Activated CD8-positive, alpha-beta T cell treated with anti-CD3 and anti-CD28 coated beads for 36 hours (primary cell): ENCODE measurements at regions of chr12 and their contacts with region 1.

Region 1: GRCh38 chr12:100142851-100143559 is at the start of gene BLTP3B:
- DNase-seq: peak; percentile 96
- ATAC-seq: peak; percentile 87
- H3K4me3 Mint-ChIP-seq: peak within 1 kb of the TSS; percentile 99
- H3K27ac Mint-ChIP-seq: peak within 1 kb of the TSS; percentile 100
- H3K4me1 Mint-ChIP-seq: peaks cover 36% of the 10 kb centered on the region
- H3K27me3 Mint-ChIP-seq: no peaks in the 10 kb centered on the region
- CTCF ChIP-seq: no peak
- total RNA-seq, gene BLTP3B: 39.6 to 41.3 TPM

Region 2: DNA sequence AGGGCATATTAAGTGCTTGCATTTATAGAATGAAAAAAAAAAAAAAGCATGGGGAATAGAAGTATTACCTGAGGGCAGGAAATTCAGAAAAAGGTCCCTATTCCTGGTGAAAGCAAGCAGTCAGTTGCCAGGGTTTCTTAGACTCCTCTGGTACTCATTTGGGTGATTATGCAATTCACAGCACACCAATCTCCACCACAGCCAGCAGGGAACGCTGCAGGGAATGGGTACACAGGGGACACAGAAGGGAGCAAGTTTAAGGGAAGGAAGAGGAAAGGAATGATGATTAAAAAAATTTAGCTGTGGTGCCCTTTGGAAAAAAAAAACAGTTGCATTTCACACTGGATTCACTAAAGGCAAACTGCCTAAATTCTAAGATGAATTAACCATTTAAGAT is 14.5 kb before region 1 on chr12:
- CTCF ChIA-PET with region 1: interaction called, 17 read pairs
- POLR2A ChIA-PET with region 1: interaction called, 3 read pairs
- intact Hi-C with region 1: no loop called
- DNase-seq: no peak
- ATAC-seq: no peak
- H3K4me3 Mint-ChIP-seq: no peak overlapping the region
- H3K27ac Mint-ChIP-seq: peak overlapping the region; percentile 18
- H3K4me1 Mint-ChIP-seq: peaks cover 40% of the 10 kb centered on the region
- H3K27me3 Mint-ChIP-seq: no peaks in the 10 kb centered on the region
- CTCF ChIP-seq: no peak

Region 3: DNA sequence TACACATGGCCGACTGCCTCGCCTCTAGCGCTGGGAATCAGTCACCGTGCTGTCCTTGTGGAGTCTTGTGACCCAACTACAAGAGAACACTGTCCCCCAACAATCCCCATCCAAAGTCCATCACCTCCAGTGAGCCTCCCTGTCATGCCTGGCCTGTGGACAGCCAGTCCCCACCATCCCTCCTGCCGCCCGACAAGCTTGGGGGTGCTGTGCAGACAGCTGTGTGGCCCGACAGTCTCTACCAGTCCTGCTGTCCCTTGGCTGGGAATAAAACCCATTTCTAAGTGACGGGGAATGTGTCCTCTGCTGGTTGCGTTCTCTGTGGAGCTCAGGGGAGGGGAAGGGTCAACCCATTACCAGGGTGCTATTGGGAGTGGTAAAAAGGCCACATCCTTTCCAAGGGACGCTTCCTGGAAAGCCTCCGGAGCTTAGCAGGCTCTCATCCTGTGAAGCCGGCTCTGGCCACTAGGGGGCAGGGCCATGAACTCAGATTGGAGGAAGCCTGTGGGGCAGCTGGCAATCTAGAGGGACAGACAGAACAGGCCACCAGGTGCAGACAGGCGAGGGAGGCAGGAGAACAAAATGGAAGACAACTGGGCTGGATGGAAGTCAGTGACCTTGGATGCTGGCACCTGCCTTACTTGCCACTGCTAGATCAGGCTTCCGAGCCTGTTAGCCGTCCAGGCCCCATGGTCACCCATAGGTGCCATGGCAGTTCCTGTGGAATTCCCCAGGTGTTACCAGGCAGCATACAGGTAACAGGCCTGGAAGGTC is 11.7 kb after region 1 on chr12:
- CTCF ChIA-PET with region 1: interaction called, 31 read pairs
- POLR2A ChIA-PET with region 1: interaction called, 3 read pairs
- intact Hi-C with region 1: no loop called
- DNase-seq: peak; percentile 87
- ATAC-seq: peak; percentile 86
- H3K4me3 Mint-ChIP-seq: no peak overlapping the region
- H3K27ac Mint-ChIP-seq: no peak overlapping the region
- H3K4me1 Mint-ChIP-seq: peaks cover 5% of the 10 kb centered on the region
- H3K27me3 Mint-ChIP-seq: no peaks in the 10 kb centered on the region
- CTCF ChIP-seq: peak; percentile 92

Region 4: DNA sequence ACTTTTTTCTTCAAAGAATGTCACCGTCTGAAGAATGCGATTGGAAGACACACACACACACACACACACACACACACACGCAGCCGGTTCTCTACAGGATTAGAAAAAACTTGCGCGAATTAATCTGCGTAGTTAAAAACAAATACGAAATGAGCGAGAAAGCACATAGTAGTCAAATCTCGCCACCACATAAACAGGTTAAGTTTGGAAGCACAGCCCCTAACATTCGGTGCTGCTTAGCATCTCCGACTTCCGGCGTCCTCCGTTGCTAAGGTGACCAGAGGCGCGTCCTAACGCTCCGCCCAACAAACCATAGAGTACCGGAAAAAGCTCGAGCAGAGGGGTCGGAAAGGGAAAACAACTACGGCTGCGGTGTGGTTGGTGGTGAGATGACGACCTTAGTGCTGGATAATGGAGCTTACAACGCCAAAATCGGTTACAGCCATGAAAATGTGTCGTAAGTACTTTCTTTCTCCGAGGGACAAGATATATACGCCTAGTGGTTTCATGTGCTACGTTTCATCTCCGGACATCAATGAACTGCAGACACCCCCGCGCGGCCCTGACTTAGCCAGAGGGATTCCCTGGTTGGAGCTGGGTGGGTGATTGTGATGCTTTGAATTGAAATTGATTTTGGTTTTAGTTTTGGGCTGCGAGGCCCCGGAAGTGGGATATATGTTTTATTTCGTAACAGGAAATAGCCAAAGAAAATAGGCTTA is 57.6 kb after region 1 on chr12 and contains the start of gene ACTR6:
- CTCF ChIA-PET with region 1: interaction called, 3 read pairs
- POLR2A ChIA-PET with region 1: interaction called, 3 read pairs
- intact Hi-C with region 1: loop called (anchors 2 kb)
- DNase-seq: peak; percentile 99
- ATAC-seq: peak; percentile 84
- H3K4me3 Mint-ChIP-seq: peak within 1 kb of the TSS; percentile 99
- H3K27ac Mint-ChIP-seq: peak within 1 kb of the TSS; percentile 100
- H3K4me1 Mint-ChIP-seq: peaks cover 17% of the 10 kb centered on the region
- H3K27me3 Mint-ChIP-seq: no peaks in the 10 kb centered on the region
- CTCF ChIP-seq: no peak
- total RNA-seq, gene ACTR6: 26.3 to 30.9 TPM

Region 5: GRCh38 chr12:100215209-100215608 is 72.2 kb after region 1 on chr12:
- CTCF ChIA-PET with region 1: no interaction called
- POLR2A ChIA-PET with region 1: no interaction called
- intact Hi-C with region 1: no loop called
- DNase-seq: no peak
- ATAC-seq: no peak
- H3K4me3 Mint-ChIP-seq: no peak overlapping the region
- H3K27ac Mint-ChIP-seq: no peak overlapping the region
- H3K4me1 Mint-ChIP-seq: no peaks in the 10 kb centered on the region
- H3K27me3 Mint-ChIP-seq: no peaks in the 10 kb centered on the region
- CTCF ChIP-seq: no peak

Region 6: DNA sequence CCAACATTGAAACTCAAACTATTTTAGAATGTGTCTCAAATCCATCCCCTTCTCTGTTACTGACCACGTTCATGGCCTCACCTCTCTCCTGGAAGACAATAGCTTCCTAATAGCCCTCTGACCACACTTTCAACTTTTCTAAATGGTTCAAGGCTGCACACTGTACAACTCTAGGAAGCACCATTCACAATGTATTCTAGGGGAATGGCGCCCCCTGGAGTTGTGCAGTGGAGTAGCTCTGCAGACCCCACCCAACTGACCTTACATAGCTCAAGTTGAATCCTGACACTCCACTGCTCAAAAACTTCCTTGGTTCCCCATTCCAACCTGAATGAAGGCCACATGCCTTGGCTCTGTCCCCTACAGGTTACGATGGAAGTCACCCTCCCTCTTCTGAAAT is 508.1 kb after region 1 on chr12:
- CTCF ChIA-PET with region 1: no interaction called
- POLR2A ChIA-PET with region 1: no interaction called
- intact Hi-C with region 1: no loop called
- DNase-seq: no peak
- ATAC-seq: no peak
- H3K4me3 Mint-ChIP-seq: no peak overlapping the region
- H3K27ac Mint-ChIP-seq: no peak overlapping the region
- H3K4me1 Mint-ChIP-seq: no peaks in the 10 kb centered on the region
- H3K27me3 Mint-ChIP-seq: peaks cover 8% of the 10 kb centered on the region
- CTCF ChIP-seq: no peak